A673 (cell line): ENCODE measurements at regions of chr20 and their contacts with region 1.

Region 1: DNA sequence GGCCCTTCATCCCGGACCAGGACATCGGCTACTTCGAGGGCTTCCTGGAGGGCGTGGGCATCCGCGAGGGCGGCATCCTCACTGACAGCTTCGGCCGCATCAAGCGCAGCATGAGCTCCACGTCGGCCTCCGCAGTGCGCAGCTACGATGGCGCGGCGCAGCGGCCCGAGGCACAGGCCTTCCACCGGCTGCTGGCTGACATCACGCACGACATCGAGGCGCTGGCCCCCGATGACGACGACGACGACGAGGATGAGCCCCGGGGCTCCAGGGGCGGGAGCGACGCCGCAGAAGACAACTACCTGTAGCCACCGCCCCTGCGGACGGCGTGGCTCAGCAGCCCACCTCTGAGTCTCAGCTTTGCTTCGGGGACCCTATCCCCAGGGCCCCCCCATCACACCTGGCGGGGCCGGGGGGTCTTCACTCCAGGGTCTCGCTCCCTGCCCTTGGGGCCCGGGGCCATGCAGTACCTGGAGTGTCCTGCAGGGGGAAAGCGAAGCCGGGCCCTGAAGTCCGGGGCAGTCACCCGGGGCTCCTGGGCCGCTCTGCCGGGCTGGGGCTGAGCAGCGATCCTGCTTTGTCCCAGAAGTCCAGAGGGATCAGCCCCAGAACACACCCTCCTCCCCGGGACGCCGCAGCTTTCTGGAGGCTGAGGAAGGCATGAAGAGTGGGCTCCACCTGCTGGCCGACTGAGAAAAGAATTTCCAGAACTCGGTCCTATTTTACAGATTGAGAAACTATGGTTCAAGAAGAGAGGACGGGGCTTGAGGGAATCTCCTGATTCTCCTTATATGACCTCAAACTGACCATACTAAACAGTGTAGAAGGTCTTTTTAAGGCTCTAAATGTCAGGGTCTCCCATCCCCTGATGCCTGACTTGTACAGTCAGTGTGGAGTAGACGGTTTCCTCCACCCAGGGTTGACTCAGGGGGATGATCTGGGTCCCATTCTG is 20.8 kb upstream of the HCK start:
- DNase-seq: peak; percentile 83
- H3K4me3 ChIP-seq: peak overlapping the region; percentile 39
- H3K27ac ChIP-seq: no peak overlapping the region
- H3K4me1 ChIP-seq: peaks cover 7% of the 10 kb centered on the region
- H3K27me3 ChIP-seq: peaks cover 1% of the 10 kb centered on the region
- CTCF ChIP-seq: peak; percentile 98

Region 2: DNA sequence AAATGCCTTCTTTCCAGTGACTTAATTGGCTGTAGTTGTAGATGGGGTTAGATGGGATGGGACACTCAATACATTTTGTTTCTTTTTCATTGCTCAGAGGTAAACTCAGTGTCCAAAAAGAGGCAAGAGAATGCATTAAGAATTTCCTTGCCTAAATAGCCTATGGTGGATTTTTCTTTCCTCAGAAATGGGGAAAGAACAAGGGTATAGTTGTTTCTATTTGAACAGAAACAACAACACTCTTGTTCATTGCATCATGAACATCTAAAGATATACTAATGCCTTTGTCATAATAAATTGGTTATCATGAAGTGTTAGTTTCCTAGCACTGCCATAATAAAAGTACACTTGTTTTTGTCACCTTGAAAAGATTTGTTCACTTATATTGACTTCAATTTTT is 605.5 kb before region 1 on chr20:
- CTCF ChIA-PET with region 1: no interaction called
- POLR2A ChIA-PET with region 1: no interaction called
- intact Hi-C with region 1: no loop called
- DNase-seq: no peak
- H3K4me3 ChIP-seq: no peak overlapping the region
- H3K27ac ChIP-seq: no peak overlapping the region
- H3K4me1 ChIP-seq: no peaks in the 10 kb centered on the region
- H3K27me3 ChIP-seq: peaks cover 46% of the 10 kb centered on the region
- CTCF ChIP-seq: no peak

Region 3: GRCh38 chr20:31822421-31823330 is 208.6 kb before region 1 on chr20:
- CTCF ChIA-PET with region 1: interaction called, 4 read pairs
- POLR2A ChIA-PET with region 1: no interaction called
- intact Hi-C with region 1: loop called (anchors 1 kb)
- DNase-seq: peak; percentile 77
- H3K4me3 ChIP-seq: no peak overlapping the region
- H3K27ac ChIP-seq: no peak overlapping the region
- H3K4me1 ChIP-seq: peaks cover 9% of the 10 kb centered on the region
- H3K27me3 ChIP-seq: no peaks in the 10 kb centered on the region
- CTCF ChIP-seq: peak; percentile 99

Region 4: DNA sequence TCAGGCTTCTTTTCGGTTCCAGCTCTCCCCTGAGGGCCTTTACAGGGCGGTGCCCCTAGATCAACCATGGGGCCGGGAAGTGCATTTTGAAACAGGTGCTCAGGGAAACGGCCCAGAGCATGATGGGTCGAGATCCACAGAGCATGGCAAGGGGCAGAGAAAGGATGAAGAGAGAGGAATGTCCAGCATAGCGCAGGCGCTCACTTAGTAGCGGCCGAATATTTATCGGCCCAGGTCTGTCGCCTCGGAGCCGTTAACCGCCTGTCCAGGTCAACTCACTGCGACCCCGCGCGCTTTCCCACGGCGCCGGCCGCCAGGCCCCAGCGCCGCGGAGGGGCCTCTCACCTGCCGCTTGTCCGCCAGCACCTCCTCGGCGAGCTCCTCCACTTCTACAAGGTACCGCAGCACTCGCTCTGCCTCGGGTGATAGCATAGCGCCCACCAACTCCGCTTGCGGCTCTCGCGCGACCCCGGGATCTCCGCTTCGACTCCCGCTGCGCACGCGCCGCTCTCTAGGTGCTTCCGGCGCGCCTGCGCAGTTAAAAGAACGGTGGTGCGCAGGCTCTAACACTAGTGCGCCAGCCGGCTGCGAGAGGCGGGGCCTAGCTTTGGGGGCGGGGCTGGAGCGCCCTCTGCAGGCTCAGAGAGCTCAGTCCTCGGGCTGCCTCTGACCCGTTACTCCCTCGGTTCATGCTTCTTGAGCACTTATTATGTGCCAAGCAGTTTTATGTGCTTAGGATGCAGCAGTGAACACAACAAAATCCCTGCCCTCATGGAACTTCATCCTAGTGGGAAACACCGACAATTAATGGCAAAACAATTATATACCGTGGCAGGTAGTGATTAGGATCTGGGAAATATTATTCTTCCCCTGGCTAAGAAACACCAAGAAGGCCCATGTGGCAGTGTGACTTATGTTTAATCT is 79.5 kb before region 1 on chr20 and contains the start of gene PDRG1:
- CTCF ChIA-PET with region 1: interaction called, 23 read pairs
- POLR2A ChIA-PET with region 1: no interaction called
- intact Hi-C with region 1: no loop called
- DNase-seq: peak; percentile 97
- H3K4me3 ChIP-seq: peak within 1 kb of the TSS; percentile 98
- H3K27ac ChIP-seq: peak within 1 kb of the TSS; percentile 84
- H3K4me1 ChIP-seq: peaks cover 8% of the 10 kb centered on the region
- H3K27me3 ChIP-seq: peaks cover 19% of the 10 kb centered on the region
- CTCF ChIP-seq: peak; percentile 99
- total RNA-seq, gene PDRG1: 18.7 and 24.3 TPM in 2 replicates

Region 5: GRCh38 chr20:32007787-32008616 is 23.3 kb before region 1 on chr20:
- CTCF ChIA-PET with region 1: no interaction called
- POLR2A ChIA-PET with region 1: no interaction called
- intact Hi-C with region 1: no loop called
- DNase-seq: no peak
- H3K4me3 ChIP-seq: no peak overlapping the region
- H3K27ac ChIP-seq: no peak overlapping the region
- H3K4me1 ChIP-seq: peaks cover 5% of the 10 kb centered on the region
- H3K27me3 ChIP-seq: no peaks in the 10 kb centered on the region
- CTCF ChIP-seq: no peak